HEK293T (cell line): ENCODE measurements at regions of chr22 and their contacts with region 1.

Region 1: DNA sequence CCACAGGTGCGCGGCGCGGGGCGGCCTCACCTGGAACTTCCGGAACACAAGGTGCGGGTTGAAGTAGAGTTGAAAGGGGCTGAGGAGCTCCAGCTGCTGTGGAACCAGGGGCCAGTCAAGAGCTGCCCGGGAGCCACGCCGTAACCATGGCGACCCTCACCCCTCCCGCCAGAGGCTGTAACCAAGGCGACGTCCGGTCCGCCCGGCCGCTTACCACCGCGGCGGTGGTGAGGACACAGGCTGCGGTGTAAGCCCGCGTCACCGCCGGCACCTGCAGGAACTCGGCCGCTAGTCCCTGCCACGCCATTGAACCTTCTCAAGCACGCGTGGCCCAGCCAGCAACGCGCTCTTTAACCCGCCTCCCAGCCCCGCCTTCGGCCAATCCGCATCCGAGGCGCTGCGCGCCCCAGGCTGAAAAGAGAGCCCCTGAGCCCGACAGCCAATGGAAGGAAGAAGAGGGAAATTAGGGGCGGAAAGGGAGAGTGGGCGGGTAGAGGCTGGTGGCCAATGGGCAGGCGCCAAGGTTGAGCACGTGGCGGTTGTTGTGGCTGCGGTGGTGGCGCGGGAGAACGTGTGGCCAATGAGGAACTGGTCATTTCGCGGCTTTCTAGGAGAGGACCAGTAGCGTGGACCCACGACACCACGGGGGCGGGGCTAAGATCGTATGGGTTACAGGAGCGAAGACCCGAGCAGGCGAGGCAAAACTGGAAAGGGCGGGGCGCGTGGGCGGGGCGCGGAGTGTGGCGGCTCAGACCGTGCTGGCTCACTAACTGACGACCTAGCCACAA is at the start of gene DERL3:
- DNase-seq: peak; percentile 96

Region 2: GRCh38 chr22:23849009-23850006 is 10.4 kb after region 1 on chr22:
- CTCF ChIA-PET with region 1: interaction called, 11 read pairs
- POLR2A ChIA-PET with region 1: no interaction called
- DNase-seq: peak; percentile 96